ENCODE measurements at regions of chr1 and their contacts with region 1.

Region 1: GRCh38 chr1:205977402-205978014 is 25.7 kb downstream of the RAB7B start:
- DNase-seq: peak; percentile 82 to 91 (median 86)
- H3K4me3 ChIP-seq: no peak overlapping the region
- H3K27ac ChIP-seq: no peak overlapping the region
- H3K4me1 ChIP-seq: peaks cover 0 to 6% (median 4%) of the 10 kb centered on the region in 4 experiments
- H3K27me3 ChIP-seq: no peaks in the 10 kb centered on the region

Region 2: DNA sequence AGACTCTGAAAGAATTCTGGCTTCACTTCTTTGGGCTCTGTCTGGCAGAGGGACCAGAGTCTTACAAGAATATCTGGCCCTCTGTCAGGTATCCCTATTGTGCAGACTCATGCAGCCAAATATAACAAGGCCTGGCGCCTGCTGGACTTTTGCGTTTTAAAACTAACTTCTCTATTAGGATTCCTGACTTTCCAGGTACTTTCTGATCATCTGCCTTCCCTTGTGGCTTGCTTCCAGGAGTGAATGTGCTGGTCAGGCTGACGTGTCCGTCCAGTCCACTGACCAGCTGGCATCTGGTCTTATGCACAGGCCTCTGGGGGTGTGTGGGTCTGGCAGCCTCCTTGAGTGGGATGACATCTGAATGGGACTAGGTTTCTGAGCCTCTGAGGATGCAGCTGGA is 193.6 kb before region 1 on chr1:
- CTCF ChIA-PET with region 1: interaction called, 173 read pairs
- POLR2A ChIA-PET with region 1: no interaction called
- DNase-seq: no peak
- H3K4me3 ChIP-seq: no peak overlapping the region
- H3K27ac ChIP-seq: no peak overlapping the region
- H3K4me1 ChIP-seq: peaks cover 0 to 7% (median 7%) of the 10 kb centered on the region in 4 experiments
- H3K27me3 ChIP-seq: no peaks in the 10 kb centered on the region

Region 3: DNA sequence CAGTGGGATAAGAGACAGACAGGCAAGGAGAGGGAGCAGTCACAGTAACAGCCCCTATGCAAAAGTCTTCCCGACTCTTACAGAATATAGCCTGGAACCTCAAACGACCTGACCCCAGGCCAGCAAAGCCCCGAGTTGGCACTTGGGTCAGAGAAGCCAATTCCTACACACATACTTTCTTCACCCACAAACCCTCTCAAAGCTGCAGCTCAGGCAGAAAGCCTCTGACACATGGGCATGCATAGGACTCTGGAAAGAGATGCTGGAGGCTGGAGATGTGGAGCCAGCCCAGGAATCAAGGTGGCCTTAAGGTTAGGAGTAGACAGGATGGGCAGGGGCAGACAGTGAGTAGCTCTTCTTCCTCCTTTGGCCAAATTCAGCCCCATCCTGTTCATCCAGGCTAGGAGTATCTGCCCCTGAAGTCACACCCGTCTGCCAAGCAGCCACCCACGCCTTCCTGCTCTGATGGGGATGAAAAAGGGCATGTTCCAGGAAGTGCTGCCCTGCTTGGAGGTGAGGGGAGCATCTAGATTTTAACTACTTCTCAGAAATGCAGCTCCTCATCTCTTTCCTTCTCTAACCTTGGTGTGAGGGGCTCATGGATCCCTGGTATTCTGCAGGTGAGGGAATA is 172.3 kb before region 1 on chr1:
- CTCF ChIA-PET with region 1: interaction called, 10 read pairs
- POLR2A ChIA-PET with region 1: no interaction called
- DNase-seq: peak in 1 of 3 donors; percentile 9
- H3K4me3 ChIP-seq: no peak overlapping the region
- H3K27ac ChIP-seq: no peak overlapping the region
- H3K4me1 ChIP-seq: peaks cover 0 to 8% (median 0%) of the 10 kb centered on the region in 4 experiments
- H3K27me3 ChIP-seq: no peaks in the 10 kb centered on the region

Region 4: DNA sequence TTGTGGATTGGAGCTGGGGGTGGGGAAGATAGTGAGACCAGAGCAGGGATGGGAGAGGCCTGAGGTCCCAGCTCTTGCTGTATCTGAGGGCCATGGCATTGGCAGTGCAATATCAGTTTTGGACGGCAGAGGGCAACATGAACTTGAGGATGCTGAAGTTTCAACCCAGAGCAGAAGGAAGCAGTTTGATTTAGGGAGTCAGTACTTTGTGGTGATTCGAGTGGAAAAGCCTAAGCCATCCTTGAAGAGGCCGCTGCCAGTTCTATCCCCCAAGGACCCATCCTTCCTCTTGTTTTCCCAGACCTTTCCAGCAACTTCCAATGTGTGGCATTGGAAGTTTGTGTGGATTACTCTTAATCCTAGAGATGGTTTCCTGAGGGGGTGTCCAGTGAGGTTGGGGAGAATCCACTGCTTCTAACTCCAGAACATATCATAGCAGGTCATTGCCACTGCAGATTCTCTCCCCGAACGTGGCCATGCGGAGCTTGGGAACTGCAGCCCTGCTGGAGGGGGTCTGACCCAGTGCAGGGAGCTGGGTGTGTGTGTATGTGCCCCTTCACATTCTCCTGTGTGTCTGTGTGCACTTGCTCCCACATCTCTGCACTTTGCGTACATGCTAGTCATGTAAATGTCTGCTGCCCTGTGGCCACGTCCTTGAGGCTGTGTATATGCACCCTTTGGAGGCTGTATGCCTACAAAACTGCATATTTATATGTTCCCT is 58.3 kb before region 1 on chr1:
- CTCF ChIA-PET with region 1: interaction called, 247 read pairs
- POLR2A ChIA-PET with region 1: no interaction called
- DNase-seq: peak; percentile 68 to 82 (median 74)
- H3K4me3 ChIP-seq: no peak overlapping the region
- H3K27ac ChIP-seq: no peak overlapping the region
- H3K4me1 ChIP-seq: peaks cover 0 to 12% (median 6%) of the 10 kb centered on the region in 4 experiments
- H3K27me3 ChIP-seq: no peaks in the 10 kb centered on the region

Region 5: GRCh38 chr1:205947002-205947623 is 30.4 kb before region 1 on chr1:
- CTCF ChIA-PET with region 1: interaction called, 16 read pairs
- POLR2A ChIA-PET with region 1: no interaction called
- DNase-seq: no peak
- H3K4me3 ChIP-seq: no peak overlapping the region
- H3K27ac ChIP-seq: no peak overlapping the region
- H3K4me1 ChIP-seq: peaks cover 0 to 10% (median 4%) of the 10 kb centered on the region in 4 experiments
- H3K27me3 ChIP-seq: peaks cover 0 to 12% (median 0%) of the 10 kb centered on the region in 5 experiments

Region 6: DNA sequence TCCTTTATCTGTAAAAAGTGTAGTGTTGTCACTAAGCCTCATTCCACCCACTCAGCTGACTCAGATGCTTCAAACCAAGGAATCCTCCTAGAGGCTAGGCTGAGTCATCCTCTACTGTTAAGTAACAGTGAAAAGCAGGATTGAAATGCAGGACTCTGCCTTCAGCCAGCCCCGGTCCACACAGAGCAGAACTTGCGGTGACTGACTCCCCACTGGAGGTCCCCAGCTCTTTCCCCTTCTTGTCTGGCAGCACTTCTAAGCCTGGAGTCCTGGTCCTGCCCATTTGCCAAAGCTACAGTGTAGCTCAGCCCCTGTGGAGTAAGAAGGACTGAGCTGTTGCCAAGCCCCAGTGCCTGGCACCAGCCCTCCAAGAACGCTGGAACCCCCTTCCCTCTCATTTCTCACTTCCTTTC is 24.0 kb after region 1 on chr1:
- CTCF ChIA-PET with region 1: interaction called, 95 read pairs
- POLR2A ChIA-PET with region 1: no interaction called
- DNase-seq: peak; percentile 40 to 71 (median 71)
- H3K4me3 ChIP-seq: peak overlapping the region in 1 of 7 experiments; percentile 60
- H3K27ac ChIP-seq: no peak overlapping the region
- H3K4me1 ChIP-seq: peaks cover 6 to 59% (median 43%) of the 10 kb centered on the region in 4 experiments
- H3K27me3 ChIP-seq: no peaks in the 10 kb centered on the region

Region 7: DNA sequence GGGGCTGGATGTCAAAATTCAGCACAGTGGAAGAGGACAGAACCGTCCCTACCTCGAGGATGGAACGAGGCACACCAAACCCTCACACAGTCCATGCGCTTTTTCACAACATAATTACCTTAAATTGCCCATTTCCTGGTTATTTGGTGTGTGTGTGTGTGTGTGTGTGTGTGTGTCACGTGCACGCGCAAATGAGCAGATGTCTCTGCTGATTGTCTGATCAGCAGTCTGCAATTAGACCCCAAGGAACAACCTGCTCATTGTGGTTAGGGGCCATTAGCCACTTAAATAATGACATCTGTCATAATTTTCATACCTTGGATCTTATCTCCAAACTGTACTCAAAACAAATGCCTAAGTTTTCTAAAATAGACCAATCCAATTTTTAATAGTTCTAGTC is 116.5 kb after region 1 on chr1:
- CTCF ChIA-PET with region 1: no interaction called
- POLR2A ChIA-PET with region 1: no interaction called
- DNase-seq: peak; percentile 74 to 98 (median 95)
- H3K4me3 ChIP-seq: no peak overlapping the region
- H3K27ac ChIP-seq: peak overlapping the region; percentile 65 to 67
- H3K4me1 ChIP-seq: peaks cover 16 to 72% (median 49%) of the 10 kb centered on the region in 4 experiments
- H3K27me3 ChIP-seq: no peaks in the 10 kb centered on the region

Region 8: DNA sequence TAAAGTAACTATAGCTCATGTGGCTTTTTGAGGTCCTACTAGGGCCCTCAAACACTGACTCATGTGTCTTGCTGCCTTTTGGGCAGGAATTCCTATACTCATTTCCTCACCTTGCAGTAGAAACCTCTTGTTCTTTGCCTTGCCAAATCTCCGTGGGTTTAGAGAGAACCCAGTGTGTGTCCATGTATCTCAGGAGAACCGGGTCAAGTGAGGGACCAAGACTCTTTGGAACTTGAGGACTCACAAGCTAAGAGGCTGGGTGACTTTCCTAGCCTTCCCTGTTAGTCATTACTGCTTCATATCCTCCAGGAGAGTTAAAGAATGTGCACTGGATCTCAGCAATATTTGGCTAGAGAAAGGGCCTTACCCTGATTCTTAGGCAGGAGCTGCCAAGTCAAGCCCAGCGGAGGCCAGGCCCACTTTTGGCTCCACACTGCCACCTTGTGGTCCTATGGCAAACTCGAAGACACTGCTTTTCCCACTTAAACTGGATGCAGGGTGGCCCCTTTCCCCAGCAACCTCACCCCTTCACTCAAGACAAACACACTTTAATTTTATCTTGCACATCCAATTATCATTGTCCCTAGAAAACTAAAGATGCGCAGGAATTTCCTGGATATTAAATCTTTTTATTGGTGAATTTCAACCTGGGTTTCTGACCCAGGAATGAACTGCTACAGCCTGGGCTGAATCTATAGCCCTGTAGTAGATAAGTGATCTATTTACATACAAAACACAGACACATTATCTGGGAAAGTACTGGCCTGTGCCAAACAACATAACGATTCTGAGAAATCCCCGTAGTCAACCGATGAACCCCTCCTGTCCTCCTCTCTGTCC is 129.0 kb after region 1 on chr1:
- CTCF ChIA-PET with region 1: interaction called, 161 read pairs
- POLR2A ChIA-PET with region 1: no interaction called
- DNase-seq: peak; percentile 80 to 89 (median 83)
- H3K4me3 ChIP-seq: no peak overlapping the region
- H3K27ac ChIP-seq: no peak overlapping the region
- H3K4me1 ChIP-seq: peaks cover 12 to 42% (median 27%) of the 10 kb centered on the region in 4 experiments
- H3K27me3 ChIP-seq: no peaks in the 10 kb centered on the region

Measured in common myeloid progenitor, CD34-positive (primary cell).